Spleen (tissue), 13 donors: ENCODE measurements at regions of chr4 and their contacts with region 1.

Region 1: DNA sequence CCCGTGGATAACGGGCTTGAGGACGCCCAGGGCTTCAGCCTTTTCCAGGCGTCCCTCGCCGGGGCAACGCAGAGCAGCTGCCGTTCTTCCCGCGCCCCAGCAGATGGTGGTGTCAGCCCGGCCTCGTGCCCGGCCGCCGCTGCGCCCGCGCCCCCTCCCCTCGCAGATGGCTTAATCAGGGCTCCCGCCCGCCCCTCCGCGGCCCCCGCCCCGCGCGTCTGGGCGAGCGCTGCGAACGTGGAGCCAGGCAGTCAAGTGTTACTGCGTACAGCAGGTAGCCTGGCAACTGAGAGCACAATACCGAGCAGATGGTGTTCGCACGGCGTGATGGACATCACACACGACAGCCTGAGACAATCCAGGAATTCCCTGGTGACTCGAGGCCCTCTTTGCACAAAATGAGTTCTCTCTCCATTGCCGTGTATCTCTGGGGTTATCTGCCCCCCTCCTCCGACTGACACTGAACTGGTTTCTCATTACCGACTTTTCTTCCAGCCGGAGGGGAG is 69.3 kb downstream of the MGST2 start:
- DNase-seq: peak; percentile 95
- H3K4me3 ChIP-seq: peak overlapping the region; percentile 31 to 73 (median 48)
- H3K27ac ChIP-seq: peak overlapping the region; percentile 10 to 86 (median 79)
- H3K4me1 ChIP-seq: peaks cover 6 to 60% (median 38%) of the 10 kb centered on the region in 6 donors
- H3K27me3 ChIP-seq: peaks cover 0 to 40% (median 7%) of the 10 kb centered on the region in 7 donors
- CTCF ChIP-seq: peak; percentile 25 to 90 (median 81)
- POLR2A ChIP-seq: no peak

Region 2: GRCh38 chr4:140012688-140013486 is 278.0 kb after region 1 on chr4:
- intact Hi-C with region 1: loop called (anchors 5 kb)
- DNase-seq: no peak
- H3K4me3 ChIP-seq: no peak overlapping the region
- H3K27ac ChIP-seq: peak overlapping the region in 2 of 8 donors; percentile 16 to 23
- H3K4me1 ChIP-seq: peaks cover 0 to 15% (median 8%) of the 10 kb centered on the region in 6 donors
- H3K27me3 ChIP-seq: no peaks in the 10 kb centered on the region
- CTCF ChIP-seq: peak; percentile 44 to 84 (median 75)
- POLR2A ChIP-seq: no peak

Region 3: DNA sequence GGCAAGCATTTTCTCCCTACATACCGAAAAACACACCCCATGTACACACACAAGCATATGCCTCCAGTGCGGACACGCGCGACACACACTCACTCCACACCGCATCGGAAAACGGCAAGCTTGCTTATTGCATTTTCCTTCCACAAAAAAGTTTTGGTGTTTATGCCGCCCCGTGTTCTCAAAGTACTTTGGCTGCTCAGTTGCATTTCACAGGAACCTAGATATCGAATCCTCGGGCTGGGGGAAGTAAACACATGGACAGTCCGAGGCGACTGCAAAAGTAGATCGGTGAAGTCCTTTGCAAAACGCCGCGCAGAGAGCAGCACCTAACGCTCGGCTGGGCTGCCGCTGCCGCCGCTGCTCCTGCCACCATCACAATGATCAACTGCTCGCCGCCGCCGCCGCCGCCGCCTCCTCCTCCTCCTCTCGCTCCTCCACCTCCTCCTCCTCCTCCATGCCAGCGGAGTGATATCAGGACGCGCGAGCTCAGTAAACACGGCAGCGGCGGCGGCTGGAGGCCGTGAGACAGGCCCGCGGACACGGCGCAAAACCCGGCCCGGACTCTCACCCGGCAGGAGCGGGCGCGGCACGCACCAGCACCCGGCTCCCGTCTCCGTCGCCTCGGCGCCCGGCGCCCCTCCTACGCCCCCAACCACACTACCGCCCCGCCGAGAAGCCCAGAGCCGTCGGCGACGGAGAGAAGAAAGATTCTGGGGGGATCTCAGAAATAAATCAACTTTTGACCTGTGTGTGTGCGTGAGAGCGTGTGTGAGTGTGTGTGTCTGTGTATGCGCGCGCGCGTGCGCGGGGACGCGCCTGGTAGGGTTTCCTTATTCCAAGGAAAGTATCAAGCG is 419.0 kb after region 1 on chr4 and contains the start of gene MAML3:
- intact Hi-C with region 1: loop called (anchors 10 kb)
- DNase-seq: peak; percentile 96
- H3K4me3 ChIP-seq: peak within 1 kb of the TSS; percentile 60 to 89 (median 76)
- H3K27ac ChIP-seq: peak within 1 kb of the TSS; percentile 93 to 99 (median 98)
- H3K4me1 ChIP-seq: peaks cover 0 to 86% (median 46%) of the 10 kb centered on the region in 6 donors
- H3K27me3 ChIP-seq: peaks cover 0 to 67% (median 8%) of the 10 kb centered on the region in 7 donors
- CTCF ChIP-seq: peak in 1 of 11 experiments; percentile 14
- POLR2A ChIP-seq: peak in 2 of 3 donors; percentile 66 to 81
- total RNA-seq, gene MAML3: 6.7 to 18.4 (median 14.7) TPM

Region 4: DNA sequence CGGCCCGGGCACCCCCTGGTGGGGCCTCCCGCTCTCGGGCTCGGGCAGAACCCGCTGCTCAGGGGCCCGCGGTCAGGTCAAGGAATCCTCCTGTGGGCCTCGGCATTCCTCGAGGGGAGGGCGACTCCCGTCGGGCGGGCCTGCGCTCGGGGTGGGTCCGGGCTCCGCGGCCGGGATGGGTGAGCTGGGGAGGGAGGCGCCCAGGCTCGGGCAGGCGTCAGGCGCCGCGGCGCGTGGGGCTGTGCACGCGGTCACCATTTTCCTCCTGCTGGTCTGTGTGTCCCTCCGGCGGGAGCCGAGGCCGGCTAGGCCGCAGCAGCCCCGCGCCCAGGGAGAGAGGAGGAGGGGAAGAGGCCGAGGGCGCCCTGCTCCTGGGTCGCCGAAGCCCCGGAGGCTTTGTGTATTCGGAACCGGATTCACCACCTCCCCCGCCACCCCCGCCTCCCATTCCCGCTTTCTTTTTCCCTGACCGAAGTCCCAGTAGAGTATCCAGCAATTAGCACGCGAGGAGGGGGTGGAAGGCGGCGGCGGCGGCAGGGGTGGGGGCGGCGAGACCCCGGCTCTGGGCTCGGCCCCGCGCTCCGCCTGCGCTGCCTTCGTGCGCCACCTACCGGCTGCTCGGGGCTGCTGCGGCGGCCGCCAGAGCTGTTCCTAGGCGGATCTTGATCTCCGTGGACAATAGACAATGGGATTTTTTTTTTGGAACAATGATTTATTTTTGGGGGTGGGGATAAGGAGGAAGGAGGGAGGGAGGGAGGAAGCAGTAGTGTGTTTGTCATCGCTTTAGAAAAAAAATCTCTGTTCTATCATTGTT is 518.0 kb after region 1 on chr4:
- intact Hi-C with region 1: loop called (anchors 5 kb)
- DNase-seq: peak; percentile 92
- H3K4me3 ChIP-seq: peak overlapping the region; percentile 43 to 76 (median 61)
- H3K27ac ChIP-seq: peak overlapping the region; percentile 67 to 90 (median 84)
- H3K4me1 ChIP-seq: peaks cover 0 to 35% (median 19%) of the 10 kb centered on the region in 6 donors
- H3K27me3 ChIP-seq: peaks cover 0 to 21% (median 6%) of the 10 kb centered on the region in 7 donors
- CTCF ChIP-seq: peak; percentile 72 to 98 (median 91)
- POLR2A ChIP-seq: no peak